ENCODE measurements at regions of chr9 and their contacts with region 1.

Region 1: GRCh38 chr9:121399883-121400607 is 30.0 kb upstream of the STOM start:
- DNase-seq: no peak
- H3K4me3 ChIP-seq: no peak overlapping the region
- H3K27ac ChIP-seq: no peak overlapping the region
- H3K4me1 ChIP-seq: no peaks in the 10 kb centered on the region
- H3K27me3 ChIP-seq: no peaks in the 10 kb centered on the region
- CTCF ChIP-seq: peak; percentile 76

Region 2: GRCh38 chr9:121213136-121213806 is 186.8 kb before region 1 on chr9:
- intact Hi-C with region 1: loop called (anchors 2 kb)
- DNase-seq: peak; percentile 89
- H3K4me3 ChIP-seq: peak overlapping the region; percentile 24
- H3K27ac ChIP-seq: peak overlapping the region; percentile 76
- H3K4me1 ChIP-seq: peaks cover 10% of the 10 kb centered on the region
- H3K27me3 ChIP-seq: no peaks in the 10 kb centered on the region
- CTCF ChIP-seq: peak; percentile 98

Region 3: GRCh38 chr9:121326130-121326838 is 73.8 kb before region 1 on chr9:
- intact Hi-C with region 1: no loop called
- DNase-seq: peak; percentile 89
- H3K4me3 ChIP-seq: peak overlapping the region; percentile 34
- H3K27ac ChIP-seq: peak overlapping the region; percentile 95
- H3K4me1 ChIP-seq: peaks cover 100% of the 10 kb centered on the region
- H3K27me3 ChIP-seq: no peaks in the 10 kb centered on the region
- CTCF ChIP-seq: no peak

Region 4: DNA sequence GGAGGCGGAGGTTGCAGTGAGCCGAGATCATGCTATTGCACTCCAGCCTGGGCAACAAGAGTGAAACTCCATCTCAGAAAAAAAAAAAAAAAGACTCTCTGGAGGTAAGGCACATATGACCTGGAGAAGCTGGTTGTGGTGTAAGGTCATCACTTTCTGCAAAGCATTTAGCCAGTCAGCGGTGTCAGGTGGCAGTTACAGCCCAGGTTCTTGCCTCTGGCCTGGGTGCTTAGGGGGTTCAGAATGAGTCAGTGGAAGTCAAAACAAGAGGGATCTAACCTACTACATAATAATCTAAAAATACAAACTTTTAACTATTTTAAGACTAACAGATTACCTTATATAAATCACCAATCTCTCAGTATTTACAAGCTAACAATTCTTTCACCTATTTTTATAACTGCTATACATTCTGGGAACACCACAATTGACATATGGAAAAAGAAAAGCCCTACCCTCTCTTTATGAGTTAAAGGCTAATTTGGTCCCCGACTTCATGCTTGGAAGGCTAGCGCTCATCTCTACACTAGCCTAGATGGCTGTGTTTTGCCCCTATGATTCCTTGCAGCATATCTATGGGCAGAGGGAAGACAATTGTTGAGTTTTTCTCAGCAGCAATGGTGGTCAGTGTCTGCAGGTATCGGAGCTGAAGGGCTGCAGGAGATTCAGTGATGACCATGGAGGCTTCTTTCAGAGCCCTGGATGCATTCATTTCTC is 59.2 kb before region 1 on chr9:
- intact Hi-C with region 1: no loop called
- DNase-seq: no peak
- H3K4me3 ChIP-seq: no peak overlapping the region
- H3K27ac ChIP-seq: peak overlapping the region; percentile 22
- H3K4me1 ChIP-seq: peaks cover 56% of the 10 kb centered on the region
- H3K27me3 ChIP-seq: no peaks in the 10 kb centered on the region
- CTCF ChIP-seq: no peak

Region 5: DNA sequence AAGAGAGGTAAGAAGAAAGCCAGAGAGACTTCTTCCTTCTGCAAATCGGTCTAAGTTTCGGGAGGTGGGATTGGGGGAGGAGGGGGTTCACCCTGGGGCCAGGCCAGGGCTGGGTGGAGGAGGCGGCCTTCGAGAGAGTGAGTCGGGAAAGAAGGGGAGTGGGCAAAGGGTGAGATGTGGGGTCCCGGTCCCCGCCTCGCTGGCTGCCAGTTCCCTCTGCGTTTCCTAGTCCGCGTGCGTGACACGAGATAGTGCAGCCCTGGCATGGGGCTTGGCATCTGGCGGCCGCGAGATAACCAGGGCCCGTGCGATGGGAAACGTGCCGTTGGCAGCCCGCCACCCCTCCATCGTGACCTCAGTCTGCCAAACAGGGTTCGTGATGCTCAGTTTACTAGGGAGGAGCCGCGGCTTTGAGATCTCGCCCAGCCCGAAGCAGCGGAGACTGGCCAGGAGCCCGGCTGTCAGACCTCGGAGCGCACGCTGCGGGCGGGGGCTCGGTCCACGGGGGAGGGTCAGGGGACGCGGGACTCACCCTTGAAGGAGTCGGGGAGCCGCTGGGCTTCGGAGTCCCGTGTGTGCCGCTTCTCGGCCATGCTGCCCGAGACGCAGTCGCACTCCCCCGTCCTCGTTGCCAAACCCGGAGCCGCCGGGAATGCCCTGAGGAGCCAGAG is 30.3 kb before region 1 on chr9 and contains the start of gene STOM:
- intact Hi-C with region 1: no loop called
- DNase-seq: peak; percentile 93
- H3K4me3 ChIP-seq: peak within 1 kb of the TSS; percentile 87
- H3K27ac ChIP-seq: peak within 1 kb of the TSS; percentile 98
- H3K4me1 ChIP-seq: peaks cover 96% of the 10 kb centered on the region
- H3K27me3 ChIP-seq: no peaks in the 10 kb centered on the region
- CTCF ChIP-seq: no peak
- total RNA-seq, gene STOM: 165 TPM